Spleen (tissue), 13 donors: ENCODE measurements at regions of chr5 and their contacts with region 1.

Region 1: GRCh38 chr5:147188200-147189108 is 46.4 kb upstream of the STK32A start:
- DNase-seq: no peak
- H3K4me3 ChIP-seq: no peak overlapping the region
- H3K27ac ChIP-seq: no peak overlapping the region
- H3K4me1 ChIP-seq: peaks cover 0 to 7% (median 3%) of the 10 kb centered on the region in 6 donors
- H3K27me3 ChIP-seq: peaks cover 0 to 9% (median 0%) of the 10 kb centered on the region in 7 donors
- CTCF ChIP-seq: peak; percentile 54 to 82 (median 76)
- POLR2A ChIP-seq: no peak

Region 2: DNA sequence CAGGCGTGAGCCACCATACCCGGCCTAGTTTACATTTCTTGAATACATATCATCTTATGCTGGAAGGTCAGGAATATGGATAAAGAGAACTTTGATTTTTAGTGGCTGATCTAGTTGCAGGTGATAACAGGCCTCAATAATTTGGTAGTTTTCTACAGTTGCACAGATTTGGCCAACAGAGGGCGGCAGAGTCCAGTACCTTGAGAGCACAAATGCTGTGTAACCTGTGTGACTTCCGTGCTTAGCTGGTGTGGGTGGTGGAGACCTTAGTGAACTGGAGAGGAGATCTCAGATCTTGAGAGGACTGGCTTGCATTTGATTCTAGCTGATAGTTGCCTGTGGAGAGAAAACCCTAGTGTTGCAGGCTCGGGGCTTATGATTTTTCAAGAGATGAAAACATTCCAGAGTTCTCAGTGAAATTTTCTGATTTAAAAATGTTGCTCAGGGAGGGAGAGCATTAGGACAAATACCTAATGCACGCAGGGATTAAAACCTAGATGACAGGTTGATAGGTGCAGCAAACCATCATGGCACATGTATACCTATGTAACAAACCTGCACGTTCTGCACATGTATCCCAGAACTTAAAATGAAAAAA is 655.1 kb before region 1 on chr5:
- intact Hi-C with region 1: loop called (anchors 5 kb)
- DNase-seq: peak; percentile 77
- H3K4me3 ChIP-seq: no peak overlapping the region
- H3K27ac ChIP-seq: no peak overlapping the region
- H3K4me1 ChIP-seq: no peaks in the 10 kb centered on the region
- H3K27me3 ChIP-seq: no peaks in the 10 kb centered on the region
- CTCF ChIP-seq: peak; percentile 28 to 73 (median 59)
- POLR2A ChIP-seq: no peak

Region 3: DNA sequence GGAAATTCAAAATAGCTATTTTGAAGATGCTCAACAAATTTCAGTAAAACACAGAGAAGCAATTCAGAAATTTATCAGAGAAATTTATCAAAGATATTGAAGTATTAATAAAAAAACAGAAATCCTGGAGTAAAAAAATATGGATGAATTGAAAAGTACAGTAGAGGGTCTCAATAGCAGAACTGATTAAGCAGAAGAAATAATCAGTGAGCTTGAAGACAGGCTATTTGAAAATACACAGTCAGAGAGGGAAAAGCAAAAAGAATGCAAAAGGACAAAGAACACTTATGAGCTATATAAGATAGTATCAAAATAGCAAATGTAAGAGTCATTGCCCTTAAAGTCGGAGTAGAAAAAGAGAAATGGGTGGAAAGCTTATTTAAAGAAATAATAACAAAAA is 202.0 kb before region 1 on chr5:
- intact Hi-C with region 1: no loop called
- DNase-seq: no peak
- H3K4me3 ChIP-seq: no peak overlapping the region
- H3K27ac ChIP-seq: no peak overlapping the region
- H3K4me1 ChIP-seq: no peaks in the 10 kb centered on the region
- H3K27me3 ChIP-seq: peaks cover 0 to 11% (median 0%) of the 10 kb centered on the region in 7 donors
- CTCF ChIP-seq: no peak
- POLR2A ChIP-seq: no peak